ENCODE measurements at regions of chr7 and their contacts with region 1.

Region 1: DNA sequence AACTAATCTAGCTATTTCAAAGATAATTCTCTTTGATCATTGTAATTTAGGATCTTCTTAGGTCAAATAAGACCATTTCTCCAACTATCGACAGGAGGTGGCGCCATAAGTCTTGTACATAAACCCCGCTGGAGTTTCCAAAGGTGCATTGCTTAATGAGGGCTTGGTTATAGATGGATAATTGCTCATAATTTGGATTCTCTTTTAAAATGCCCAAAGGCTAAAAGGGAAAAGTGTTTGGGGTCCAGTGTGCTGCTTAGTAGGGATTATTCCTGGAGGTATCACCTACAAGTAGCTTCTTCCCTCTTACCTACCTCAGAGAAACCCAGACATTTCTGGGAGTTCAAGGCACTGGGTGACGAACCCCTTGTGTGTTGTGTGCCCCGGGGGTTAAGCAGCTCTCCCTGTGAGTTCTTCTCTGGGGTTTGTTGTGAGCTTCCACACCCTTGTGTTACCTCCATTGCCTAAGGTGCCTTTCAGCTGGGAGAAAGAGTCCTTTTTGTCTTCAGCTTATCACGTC is 75.2 kb downstream of the PAXIP1 start:
- DNase-seq: peak; percentile 59
- H3K4me3 Mint-ChIP-seq: peak overlapping the region; percentile 87
- H3K27ac Mint-ChIP-seq: peak overlapping the region; percentile 94
- H3K4me1 Mint-ChIP-seq: peaks cover 22% of the 10 kb centered on the region
- H3K27me3 Mint-ChIP-seq: peaks cover 18% of the 10 kb centered on the region

Region 2: DNA sequence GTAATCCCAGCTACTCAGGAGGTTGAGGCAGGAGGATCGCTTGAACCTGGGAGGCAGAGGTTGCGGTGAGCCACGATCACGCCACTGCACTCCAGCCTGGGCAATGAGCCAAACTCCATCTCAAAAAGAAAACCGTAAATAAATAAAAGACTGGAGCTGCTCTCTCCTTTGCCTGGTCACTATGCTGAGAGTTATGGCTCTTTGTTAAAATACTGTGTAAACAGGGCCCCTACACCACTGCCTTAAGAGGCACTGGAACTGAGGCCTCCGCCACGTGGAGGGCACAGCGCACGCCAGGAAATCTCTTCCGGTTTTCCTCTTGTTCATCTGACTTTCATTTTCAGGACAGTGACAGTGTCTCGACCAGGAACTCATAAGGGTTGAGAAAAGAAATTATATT is 48.1 kb before region 1 on chr7:
- intact Hi-C with region 1: no loop called
- DNase-seq: no peak
- H3K4me3 Mint-ChIP-seq: no peak overlapping the region
- H3K27ac Mint-ChIP-seq: no peak overlapping the region
- H3K4me1 Mint-ChIP-seq: no peaks in the 10 kb centered on the region
- H3K27me3 Mint-ChIP-seq: no peaks in the 10 kb centered on the region

Region 3: GRCh38 chr7:154953006-154953684 is 25.5 kb after region 1 on chr7:
- intact Hi-C with region 1: loop called (anchors 1 kb)
- DNase-seq: no peak
- H3K4me3 Mint-ChIP-seq: no peak overlapping the region
- H3K27ac Mint-ChIP-seq: no peak overlapping the region
- H3K4me1 Mint-ChIP-seq: no peaks in the 10 kb centered on the region
- H3K27me3 Mint-ChIP-seq: no peaks in the 10 kb centered on the region

Region 4: GRCh38 chr7:155069992-155070751 is 142.5 kb after region 1 on chr7 and contains the start of gene HTR5A:
- intact Hi-C with region 1: loop called (anchors 2 kb)
- DNase-seq: peak; percentile 83
- H3K4me3 Mint-ChIP-seq: peak within 1 kb of the TSS; percentile 11
- H3K27ac Mint-ChIP-seq: no peak within 1 kb of the TSS
- H3K4me1 Mint-ChIP-seq: peaks cover 6% of the 10 kb centered on the region
- H3K27me3 Mint-ChIP-seq: peaks cover 30% of the 10 kb centered on the region
- total RNA-seq, gene HTR5A: not detected in 2 replicates

Region 5: DNA sequence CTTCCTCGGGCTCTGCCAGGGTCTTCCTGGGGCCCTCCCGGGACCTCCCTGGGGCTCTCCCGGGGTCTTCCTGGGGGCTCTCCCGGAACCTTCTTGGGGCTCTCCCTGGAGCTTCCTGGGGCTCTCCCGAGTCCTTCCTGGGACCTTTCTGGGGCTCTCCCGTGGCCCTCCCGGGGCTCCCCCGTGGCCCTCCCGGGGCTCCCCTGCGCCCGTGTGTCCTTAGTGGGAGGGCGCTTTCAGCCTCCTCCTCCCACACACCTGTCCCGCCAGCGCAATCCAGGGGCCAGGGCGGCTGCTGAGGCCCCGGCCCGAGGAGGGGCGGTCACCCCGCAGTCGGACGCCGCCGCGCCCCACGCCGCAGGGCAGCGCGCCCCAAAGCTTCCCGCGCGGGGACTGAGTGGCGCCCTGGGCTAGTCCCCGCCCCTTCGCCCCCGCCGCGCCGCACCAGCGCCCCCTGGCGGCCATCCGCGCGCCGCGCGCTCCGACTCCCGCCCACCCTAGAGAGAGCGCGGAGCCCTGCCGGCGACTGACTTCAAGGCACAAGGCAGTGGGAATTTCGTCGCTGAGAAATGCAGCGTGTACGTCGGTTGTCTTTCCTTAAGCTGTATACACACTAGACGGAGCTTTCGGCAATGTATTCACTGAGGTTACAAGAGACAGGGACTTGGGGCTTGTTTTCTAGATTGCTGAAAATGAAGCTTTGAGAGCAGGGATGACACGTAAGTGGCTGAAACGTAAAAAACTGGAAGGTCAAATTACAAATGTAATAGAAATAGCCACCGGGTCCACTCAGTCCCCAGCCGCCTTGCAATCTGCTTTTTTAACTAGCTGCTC is 417.1 kb after region 1 on chr7:
- intact Hi-C with region 1: loop called (anchors 1 kb)
- DNase-seq: peak; percentile 75
- H3K4me3 Mint-ChIP-seq: peak overlapping the region; percentile 68
- H3K27ac Mint-ChIP-seq: no peak overlapping the region
- H3K4me1 Mint-ChIP-seq: peaks cover 12% of the 10 kb centered on the region
- H3K27me3 Mint-ChIP-seq: peaks cover 19% of the 10 kb centered on the region

Region 6: GRCh38 chr7:155533827-155534690 is 606.4 kb after region 1 on chr7:
- intact Hi-C with region 1: loop called (anchors 10 kb)
- DNase-seq: no peak
- H3K4me3 Mint-ChIP-seq: no peak overlapping the region
- H3K27ac Mint-ChIP-seq: no peak overlapping the region
- H3K4me1 Mint-ChIP-seq: peaks cover 7% of the 10 kb centered on the region
- H3K27me3 Mint-ChIP-seq: peaks cover 67% of the 10 kb centered on the region

Measured in activated T-helper 2 cell treated with anti-CD3 and anti-CD28 coated beads, Interferon-gamma antibody, Interleukin-2, Interleukin-4, amounts not matched to agents 10 μg/mL and 5 μg/mL and 100 μg/mL, durations not matched to agents 14 hours and 24 hours and 36 hours (primary cell).